ENCODE measurements at regions of chr17 and their contacts with region 1.

Region 1: GRCh38 chr17:39576187-39576586 is 31.5 kb downstream of the NEUROD2 start:
- DNase-seq: peak; percentile 35
- ATAC-seq: peak; percentile 71
- H3K4me3 ChIP-seq: no peak overlapping the region
- H3K27ac ChIP-seq: no peak overlapping the region
- H3K4me1 ChIP-seq: peaks cover 15% of the 10 kb centered on the region
- H3K27me3 ChIP-seq: peaks cover 5 to 37% of the 10 kb centered on the region in 2 experiments; a peak in 3 of 5 replicates
- CTCF ChIP-seq: peak; percentile 53
- EP300 ChIP-seq: no peak
- POLR2A ChIP-seq: no peak
- RAD21 ChIP-seq: 0 out of 2 replicates have a peak, but pooled peaks have one; percentile 21

Region 2: DNA sequence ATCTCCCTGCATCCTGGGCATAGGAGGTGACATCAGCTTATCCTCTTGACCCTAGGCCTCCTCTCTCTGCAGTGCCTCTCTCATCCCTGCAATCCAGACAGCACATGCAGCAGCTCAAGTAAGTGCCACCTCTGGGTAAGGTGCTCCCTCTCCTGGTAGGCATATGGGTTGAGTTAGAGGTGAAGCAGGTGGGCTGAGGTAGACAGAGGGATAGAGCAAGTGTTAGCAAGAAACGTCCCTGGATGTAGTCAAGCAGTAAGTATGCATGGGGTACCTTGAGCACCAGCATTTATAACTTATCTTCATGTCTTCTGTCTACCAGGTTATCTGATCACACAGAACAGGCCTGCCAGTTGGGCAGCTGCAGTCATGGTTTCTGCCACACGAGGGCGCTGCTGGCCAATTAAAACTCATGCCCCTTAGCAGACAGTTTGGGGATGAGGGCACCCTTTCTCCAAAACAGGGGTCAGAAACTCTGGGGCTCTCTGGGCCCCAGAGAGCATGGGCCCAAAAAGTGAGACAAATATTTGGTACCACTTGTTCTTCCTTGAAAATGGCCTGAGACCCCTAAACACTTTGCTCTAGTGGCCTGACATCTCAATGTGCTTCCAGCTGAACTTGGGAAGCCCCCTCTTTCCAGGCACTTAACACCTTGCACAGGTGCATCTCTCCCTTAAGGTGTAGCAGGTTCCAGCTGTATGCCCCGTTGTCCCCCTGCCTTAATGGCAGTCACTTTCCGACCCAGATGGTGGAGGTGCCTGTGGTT is 28.3 kb before region 1 on chr17:
- CTCF ChIA-PET with region 1: interaction called, 16 read pairs
- POLR2A ChIA-PET with region 1: no interaction called
- in situ Hi-C with region 1: no loop called
- intact Hi-C with region 1: loop called (anchors 2 kb)
- DNase-seq: peak; percentile 50
- ATAC-seq: peak; percentile 83
- H3K4me3 ChIP-seq: no peak overlapping the region
- H3K27ac ChIP-seq: no peak overlapping the region
- H3K4me1 ChIP-seq: peaks cover 9% of the 10 kb centered on the region; the same call in 1 of the 2 replicates
- H3K27me3 ChIP-seq: no peaks in the 10 kb centered on the region
- CTCF ChIP-seq: peak; percentile 92
- EP300 ChIP-seq: no peak
- POLR2A ChIP-seq: no peak
- RAD21 ChIP-seq: peak; percentile 78

Region 3: GRCh38 chr17:39704821-39705551 is 128.8 kb after region 1 on chr17:
- CTCF ChIA-PET with region 1: no interaction called
- POLR2A ChIA-PET with region 1: no interaction called
- in situ Hi-C with region 1: no loop called
- intact Hi-C with region 1: no loop called
- DNase-seq: no peak
- ATAC-seq: no peak
- H3K4me3 ChIP-seq: no peak overlapping the region; a peak in 1 of 6 replicates
- H3K27ac ChIP-seq: no peak overlapping the region
- H3K4me1 ChIP-seq: peaks cover 51% of the 10 kb centered on the region
- H3K27me3 ChIP-seq: no peaks in the 10 kb centered on the region
- CTCF ChIP-seq: peak; percentile 27
- EP300 ChIP-seq: no peak
- POLR2A ChIP-seq: no peak
- RAD21 ChIP-seq: no peak

Measured in HepG2 (cell line).